ENCODE measurements at regions of chr19 and their contacts with region 1.

Region 1: DNA sequence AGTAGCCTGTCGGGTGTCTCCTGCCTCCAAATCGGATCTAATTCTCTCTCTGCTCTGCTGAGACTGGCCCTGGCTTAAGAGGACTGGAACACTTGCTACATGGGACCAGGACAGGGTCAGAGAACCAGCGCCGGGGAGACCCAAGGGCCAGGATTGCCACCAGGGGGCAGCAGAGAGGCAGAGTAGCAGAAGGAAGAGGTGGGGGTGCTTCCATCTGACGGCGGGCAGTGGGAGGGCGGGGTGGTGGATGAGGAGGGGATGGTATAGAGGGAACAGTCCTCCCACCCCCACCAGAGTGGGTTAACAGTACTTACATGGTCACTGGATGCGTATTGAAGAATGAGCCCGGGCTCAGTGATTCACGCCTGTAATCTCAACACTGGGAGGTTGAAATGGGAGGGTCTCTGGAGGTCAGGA is 11.9 kb downstream of the SELENOW start:
- DNase-seq: peak; percentile 26
- H3K4me3 ChIP-seq: no peak overlapping the region
- H3K27ac ChIP-seq: no peak overlapping the region
- H3K4me1 ChIP-seq: peaks cover 7% of the 10 kb centered on the region
- H3K27me3 ChIP-seq: no peaks in the 10 kb centered on the region
- CTCF ChIP-seq: peak; percentile 82 to 83

Region 2: GRCh38 chr19:47447470-47448359 is 342.7 kb before region 1 on chr19:
- CTCF ChIA-PET with region 1: no interaction called
- dilution Hi-C with region 1: loop called (anchors 5 kb)
- in situ Hi-C with region 1: no loop called
- intact Hi-C with region 1: no loop called
- DNase-seq: peak; percentile 49
- H3K4me3 ChIP-seq: no peak overlapping the region
- H3K27ac ChIP-seq: no peak overlapping the region
- H3K4me1 ChIP-seq: peaks cover 5% of the 10 kb centered on the region
- H3K27me3 ChIP-seq: peaks cover 27% of the 10 kb centered on the region
- CTCF ChIP-seq: no peak

Region 3: GRCh38 chr19:47545061-47545948 is 245.1 kb before region 1 on chr19:
- CTCF ChIA-PET with region 1: no interaction called
- dilution Hi-C with region 1: no loop called
- in situ Hi-C with region 1: no loop called
- intact Hi-C with region 1: no loop called
- DNase-seq: no peak
- H3K4me3 ChIP-seq: no peak overlapping the region
- H3K27ac ChIP-seq: no peak overlapping the region
- H3K4me1 ChIP-seq: no peaks in the 10 kb centered on the region
- H3K27me3 ChIP-seq: no peaks in the 10 kb centered on the region
- CTCF ChIP-seq: no peak

Region 4: GRCh38 chr19:47682939-47683338 is 107.5 kb before region 1 on chr19:
- CTCF ChIA-PET with region 1: no interaction called
- dilution Hi-C with region 1: loop called (anchors 10 kb)
- in situ Hi-C with region 1: no loop called
- intact Hi-C with region 1: no loop called
- DNase-seq: no peak
- H3K4me3 ChIP-seq: no peak overlapping the region
- H3K27ac ChIP-seq: no peak overlapping the region
- H3K4me1 ChIP-seq: no peaks in the 10 kb centered on the region
- H3K27me3 ChIP-seq: no peaks in the 10 kb centered on the region
- CTCF ChIP-seq: no peak

Region 5: DNA sequence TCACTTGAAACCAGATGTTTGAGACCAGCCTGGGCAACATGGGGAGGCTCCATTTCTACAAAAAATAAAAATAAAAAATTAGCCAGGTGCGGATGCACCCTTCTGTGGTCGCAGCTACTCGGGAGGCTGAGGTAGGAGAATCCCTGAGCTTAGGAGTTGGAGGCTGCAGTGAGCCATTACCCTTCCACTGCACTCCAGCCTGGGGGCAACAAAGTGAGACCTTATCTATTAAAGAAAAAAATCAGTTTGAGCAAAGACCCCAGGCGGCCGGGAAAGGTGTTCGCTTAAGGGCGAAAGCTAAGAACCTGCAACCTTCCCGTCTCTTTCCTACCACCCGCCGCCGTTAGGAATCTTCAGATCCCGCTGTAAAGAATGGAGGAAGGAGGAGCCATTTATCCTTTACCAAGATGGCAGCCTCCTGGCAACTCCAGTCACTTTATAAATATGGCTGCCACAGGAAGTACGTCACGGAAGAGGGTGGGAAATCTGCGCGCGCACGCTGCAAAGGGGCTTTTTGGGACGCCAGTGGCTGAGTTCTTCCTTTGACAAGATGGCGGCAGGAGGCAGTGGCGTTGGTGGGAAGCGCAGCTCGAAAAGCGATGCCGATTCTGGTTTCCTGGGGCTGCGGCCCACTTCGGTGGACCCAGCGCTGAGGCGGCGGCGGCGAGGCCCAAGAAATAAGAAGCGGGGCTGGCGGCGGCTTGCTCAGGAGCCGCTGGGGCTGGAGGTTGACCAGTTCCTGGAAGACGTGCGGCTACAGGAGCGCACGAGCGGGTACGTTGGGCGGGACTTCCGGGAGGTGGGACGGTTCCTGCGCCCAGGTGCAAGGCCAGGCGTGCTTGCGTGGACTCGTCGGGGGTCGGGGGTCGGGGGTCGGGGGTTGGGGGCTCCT is 45.1 kb before region 1 on chr19 and contains the start of gene NOP53:
- CTCF ChIA-PET with region 1: no interaction called
- dilution Hi-C with region 1: no loop called
- in situ Hi-C with region 1: no loop called
- intact Hi-C with region 1: loop called (anchors 2 kb)
- DNase-seq: peak; percentile 94
- H3K4me3 ChIP-seq: peak within 1 kb of the TSS; percentile 63 to 84 (median 76)
- H3K27ac ChIP-seq: peak within 1 kb of the TSS; percentile 72
- H3K4me1 ChIP-seq: peaks cover 19% of the 10 kb centered on the region
- H3K27me3 ChIP-seq: no peaks in the 10 kb centered on the region
- CTCF ChIP-seq: no peak
- total RNA-seq, gene NOP53: 87.4 to 106 TPM

Region 6: GRCh38 chr19:47813304-47814004 is 23.0 kb after region 1 on chr19:
- CTCF ChIA-PET with region 1: no interaction called
- dilution Hi-C with region 1: no loop called
- in situ Hi-C with region 1: no loop called
- intact Hi-C with region 1: no loop called
- DNase-seq: peak; percentile 32
- H3K4me3 ChIP-seq: no peak overlapping the region
- H3K27ac ChIP-seq: no peak overlapping the region
- H3K4me1 ChIP-seq: no peaks in the 10 kb centered on the region
- H3K27me3 ChIP-seq: no peaks in the 10 kb centered on the region
- CTCF ChIP-seq: peak; percentile 46 to 69

Region 7: DNA sequence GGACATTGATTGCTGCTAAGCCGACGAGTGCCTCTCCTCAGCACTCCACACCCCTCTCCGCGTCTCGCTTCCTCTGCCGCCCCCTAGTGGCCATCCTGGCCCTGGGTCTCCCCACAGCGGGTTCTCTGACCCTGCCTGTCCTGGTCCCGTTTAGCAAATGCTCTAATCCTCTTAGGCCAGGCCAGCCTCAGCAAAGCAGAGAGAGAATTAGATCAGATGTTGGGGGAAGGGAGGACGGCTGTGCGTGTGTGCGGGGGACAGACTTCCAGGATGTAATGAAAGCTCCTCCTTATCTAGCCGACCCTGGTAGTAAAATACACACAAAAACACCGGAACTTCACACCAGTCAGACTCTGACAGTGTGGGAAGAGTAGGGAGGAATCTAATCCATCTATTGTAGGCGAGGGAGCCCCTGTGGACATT is 73.1 kb after region 1 on chr19:
- CTCF ChIA-PET with region 1: no interaction called
- dilution Hi-C with region 1: no loop called
- in situ Hi-C with region 1: no loop called
- intact Hi-C with region 1: loop called (anchors 1 kb)
- DNase-seq: peak; percentile 45
- H3K4me3 ChIP-seq: no peak overlapping the region
- H3K27ac ChIP-seq: no peak overlapping the region
- H3K4me1 ChIP-seq: no peaks in the 10 kb centered on the region
- H3K27me3 ChIP-seq: no peaks in the 10 kb centered on the region
- CTCF ChIP-seq: peak; percentile 87 to 95

Measured in mammary epithelial cell (primary cell).